Endothelial cell of umbilical vein (primary cell): ENCODE measurements at regions of chr3 and their contacts with region 1.

Region 1: GRCh38 chr3:15108082-15108545 is 9.2 kb upstream of the RBSN start:
- DNase-seq: peak; percentile 62
- H3K4me3 ChIP-seq: no peak overlapping the region
- H3K27ac ChIP-seq: no peak overlapping the region
- H3K4me1 ChIP-seq: no peaks in the 10 kb centered on the region
- H3K27me3 ChIP-seq: peaks cover 2 to 3% of the 10 kb centered on the region in 2 experiments
- CTCF ChIP-seq: peak; percentile 88 to 96
- POLR2A ChIP-seq: no peak

Region 2: DNA sequence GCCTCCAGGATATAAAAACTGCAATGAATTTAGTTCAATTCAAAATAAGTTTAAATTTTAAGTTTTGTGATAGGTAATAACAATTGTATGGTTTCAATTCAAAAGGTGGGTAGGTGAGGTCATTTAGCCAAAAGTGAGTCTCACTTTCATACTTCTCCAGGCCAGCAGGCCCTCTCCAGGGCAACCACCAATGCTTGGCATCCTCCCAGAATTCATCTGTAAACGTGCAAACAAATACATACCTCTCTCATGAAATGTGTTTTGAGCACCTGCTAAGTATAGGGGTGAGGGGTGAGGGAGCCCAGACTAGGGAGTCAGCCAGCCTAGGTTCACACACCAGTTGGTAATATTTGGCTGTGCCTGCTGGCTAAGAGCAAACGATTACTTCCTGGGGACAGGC is 12.9 kb after region 1 on chr3:
- CTCF ChIA-PET with region 1: interaction called, 24 read pairs
- POLR2A ChIA-PET with region 1: no interaction called
- dilution Hi-C with region 1: no loop called
- intact Hi-C with region 1: no loop called
- DNase-seq: no peak
- H3K4me3 ChIP-seq: no peak overlapping the region
- H3K27ac ChIP-seq: no peak overlapping the region
- H3K4me1 ChIP-seq: no peaks in the 10 kb centered on the region
- H3K27me3 ChIP-seq: no peaks in the 10 kb centered on the region
- CTCF ChIP-seq: no peak
- POLR2A ChIP-seq: no peak

Region 3: GRCh38 chr3:15256861-15257341 is 148.8 kb after region 1 on chr3:
- CTCF ChIA-PET with region 1: no interaction called
- POLR2A ChIA-PET with region 1: no interaction called
- dilution Hi-C with region 1: no loop called
- intact Hi-C with region 1: loop called (anchors 5 kb)
- DNase-seq: no peak
- H3K4me3 ChIP-seq: no peak overlapping the region
- H3K27ac ChIP-seq: no peak overlapping the region
- H3K4me1 ChIP-seq: no peaks in the 10 kb centered on the region
- H3K27me3 ChIP-seq: no peaks in the 10 kb centered on the region
- CTCF ChIP-seq: no peak
- POLR2A ChIP-seq: peak; percentile 35

Region 4: DNA sequence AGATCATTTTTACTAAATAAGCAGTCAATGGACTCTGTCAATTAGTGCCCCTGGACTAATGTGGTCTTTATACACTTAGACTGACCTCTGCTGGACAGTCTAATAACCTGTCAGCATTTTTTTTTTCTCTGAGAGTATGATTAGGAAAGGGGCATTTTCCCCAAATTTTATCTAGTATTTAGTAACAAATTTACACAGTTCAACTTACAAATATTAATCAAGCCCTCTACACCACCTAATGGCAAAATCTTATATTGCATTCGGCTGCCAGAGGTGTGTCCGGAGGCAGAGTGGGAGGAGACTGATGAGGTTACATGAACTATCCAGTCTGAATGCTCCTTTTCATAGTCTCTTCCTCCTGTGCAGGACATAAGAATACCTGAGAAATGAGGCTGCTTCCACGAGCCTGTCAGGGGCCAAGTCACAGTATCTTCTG is 449.4 kb after region 1 on chr3:
- CTCF ChIA-PET with region 1: interaction called, 13 read pairs
- POLR2A ChIA-PET with region 1: no interaction called
- dilution Hi-C with region 1: no loop called
- intact Hi-C with region 1: loop called (anchors 1 kb)
- DNase-seq: peak; percentile 93
- H3K4me3 ChIP-seq: no peak overlapping the region
- H3K27ac ChIP-seq: no peak overlapping the region
- H3K4me1 ChIP-seq: no peaks in the 10 kb centered on the region
- H3K27me3 ChIP-seq: no peaks in the 10 kb centered on the region
- CTCF ChIP-seq: peak; percentile 36 to 37
- POLR2A ChIP-seq: no peak